Activated CD8-positive, alpha-beta T cell treated with anti-CD3 and anti-CD28 coated beads for 36 hours (primary cell): ENCODE measurements at regions of chr17 and their contacts with region 1.

Region 1: DNA sequence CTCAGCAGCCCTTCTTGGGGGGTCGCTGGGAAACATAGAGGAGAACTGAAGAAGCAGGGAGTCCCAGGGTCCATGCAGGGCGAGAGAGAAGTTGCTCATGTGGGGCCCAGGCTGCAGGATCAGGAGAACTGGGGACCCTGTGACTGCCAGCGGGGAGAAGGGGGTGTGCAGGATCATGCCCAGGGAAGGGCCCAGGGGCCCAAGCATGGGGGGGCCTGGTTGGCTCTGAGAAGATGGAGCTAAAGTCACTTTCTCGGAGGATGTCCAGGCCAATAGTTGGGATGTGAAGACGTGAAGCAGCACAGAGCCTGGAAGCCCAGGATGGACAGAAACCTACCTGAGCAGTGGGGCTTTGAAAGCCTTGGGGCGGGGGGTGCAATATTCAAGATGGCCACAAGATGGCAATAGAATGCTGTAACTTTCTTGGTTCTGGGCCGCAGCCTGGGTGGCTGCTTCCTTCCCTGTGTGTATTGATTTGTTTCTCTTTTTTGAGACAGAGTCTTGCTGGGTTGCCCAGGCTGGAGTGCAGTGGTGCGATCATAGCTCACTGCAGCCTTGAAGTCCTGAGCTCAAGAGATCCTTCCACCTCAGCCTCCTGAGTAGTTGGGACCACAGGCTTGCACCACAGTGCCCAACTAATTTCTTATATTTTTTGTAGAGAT is 3.4 kb downstream of the STH start:
- DNase-seq: peak; percentile 84
- ATAC-seq: peak; percentile 99
- H3K4me3 Mint-ChIP-seq: no peak overlapping the region
- H3K27ac Mint-ChIP-seq: no peak overlapping the region
- H3K4me1 Mint-ChIP-seq: no peaks in the 10 kb centered on the region
- H3K27me3 Mint-ChIP-seq: no peaks in the 10 kb centered on the region
- CTCF ChIP-seq: peak; percentile 85

Region 2: DNA sequence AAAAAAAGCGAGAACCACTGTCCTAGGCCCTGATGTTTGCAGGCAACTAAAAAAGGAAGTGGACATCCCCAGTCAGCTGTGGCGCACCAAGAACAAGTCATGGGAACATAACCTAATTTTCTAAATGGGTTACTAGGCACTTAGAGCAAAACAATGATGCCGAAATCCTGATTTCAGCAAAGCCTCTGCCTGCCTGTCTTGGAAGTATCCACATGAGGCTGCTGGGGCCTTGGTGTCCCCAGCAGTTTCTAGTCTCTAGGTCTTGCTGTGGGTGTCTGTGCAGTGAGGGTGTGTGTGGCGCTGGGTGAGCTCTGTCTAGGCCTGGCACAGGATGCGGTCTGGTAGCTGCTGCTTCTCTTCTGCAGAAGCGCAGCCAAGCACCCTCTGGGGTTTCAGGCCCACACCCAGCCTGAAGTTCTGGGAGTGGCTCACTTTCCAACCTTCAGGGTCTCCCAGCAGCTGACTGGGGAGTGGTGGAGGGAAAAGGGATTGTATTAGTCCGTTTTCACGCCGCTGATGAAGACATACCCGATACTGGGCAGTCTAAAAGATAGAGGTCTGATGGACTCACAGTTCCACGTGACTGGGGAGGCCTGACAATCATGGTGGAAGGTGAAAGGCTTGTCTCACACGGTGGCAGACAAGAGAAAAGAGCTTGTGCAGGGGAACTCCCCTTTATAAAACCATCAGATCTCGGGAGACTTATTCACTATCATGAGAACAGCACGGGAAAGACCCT is 17.8 kb after region 1 on chr17:
- CTCF ChIA-PET with region 1: interaction called, 12 read pairs
- POLR2A ChIA-PET with region 1: interaction called, 3 read pairs
- intact Hi-C with region 1: no loop called
- DNase-seq: peak; percentile 69
- ATAC-seq: peak; percentile 93
- H3K4me3 Mint-ChIP-seq: peak overlapping the region; percentile 5
- H3K27ac Mint-ChIP-seq: peak overlapping the region; percentile 86
- H3K4me1 Mint-ChIP-seq: peaks cover 20% of the 10 kb centered on the region
- H3K27me3 Mint-ChIP-seq: no peaks in the 10 kb centered on the region
- CTCF ChIP-seq: no peak